H1 (cell line): ENCODE measurements at regions of chr7 and their contacts with region 1.

Region 1: DNA sequence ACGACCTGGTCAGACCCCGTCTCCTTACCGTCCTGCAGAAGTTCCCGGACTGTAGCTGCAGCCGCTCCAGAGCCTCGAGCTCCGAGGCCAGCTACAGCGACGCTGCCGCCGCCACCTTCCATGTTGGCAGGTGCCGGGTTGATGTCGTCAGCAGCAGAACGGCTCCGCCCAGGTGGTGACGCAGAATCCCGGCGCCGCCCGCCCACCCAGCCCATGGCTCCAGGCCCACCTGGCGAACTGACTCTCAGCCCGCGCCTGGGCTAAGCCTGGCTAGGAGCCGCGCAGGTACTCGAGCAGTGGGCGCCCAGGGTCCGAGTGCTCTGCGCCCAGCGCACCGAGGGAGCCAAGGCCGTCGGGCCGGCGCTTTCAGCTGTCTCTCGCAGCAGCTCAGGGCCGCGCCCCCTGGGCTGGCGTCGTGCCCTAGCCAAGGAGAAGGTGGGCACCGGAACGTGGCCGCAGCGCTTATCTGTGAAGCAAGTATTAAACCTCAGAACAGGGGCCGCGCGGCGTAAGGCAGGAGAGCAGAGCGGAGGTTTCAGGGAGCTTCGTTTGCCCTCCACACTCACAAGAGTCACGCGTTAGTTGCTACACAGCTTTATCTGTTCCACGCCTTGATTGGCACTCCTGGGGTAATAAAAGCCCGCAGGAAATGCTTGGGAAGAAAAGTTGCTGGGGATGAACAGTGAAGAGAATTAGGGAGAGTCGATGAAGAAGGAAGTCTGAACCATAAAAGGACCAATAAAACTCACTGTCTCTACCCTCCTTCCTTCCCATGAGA is at the starts of genes COG5 and DUS4L:
- DNase-seq: peak; percentile 50 to 92
- H3K4me3 ChIP-seq: peak within 1 kb of the TSS; percentile 80 to 99 (median 94)
- H3K27ac ChIP-seq: peak within 1 kb of the TSS; percentile 97
- H3K4me1 ChIP-seq: peaks cover 0 to 3% (median 0%) of the 10 kb centered on the region in 4 experiments; a peak in 2 of 7 replicates
- H3K27me3 ChIP-seq: no peaks in the 10 kb centered on the region
- CTCF ChIP-seq: no peak
- EP300 ChIP-seq: no peak
- POLR2A ChIP-seq: peak; percentile 75 to 96
- RAD21 ChIP-seq: no peak
- total RNA-seq, gene COG5: 18.1 and 28.1 TPM in 2 replicates
- total RNA-seq, gene DUS4L: 11.1 and 11.5 TPM in 2 replicates

Region 2: GRCh38 chr7:107262857-107263256 is 301.1 kb before region 1 on chr7:
- CTCF ChIA-PET with region 1: no interaction called
- POLR2A ChIA-PET with region 1: no interaction called
- DNase-seq: no peak
- H3K4me3 ChIP-seq: no peak overlapping the region
- H3K27ac ChIP-seq: no peak overlapping the region
- H3K4me1 ChIP-seq: no peaks in the 10 kb centered on the region
- H3K27me3 ChIP-seq: no peaks in the 10 kb centered on the region
- CTCF ChIP-seq: no peak
- EP300 ChIP-seq: no peak
- POLR2A ChIP-seq: no peak
- RAD21 ChIP-seq: no peak

Region 3: GRCh38 chr7:107446531-107446930 is 117.4 kb before region 1 on chr7:
- CTCF ChIA-PET with region 1: no interaction called
- POLR2A ChIA-PET with region 1: no interaction called
- DNase-seq: no peak
- H3K4me3 ChIP-seq: no peak overlapping the region
- H3K27ac ChIP-seq: no peak overlapping the region
- H3K4me1 ChIP-seq: no peaks in the 10 kb centered on the region
- H3K27me3 ChIP-seq: no peaks in the 10 kb centered on the region
- CTCF ChIP-seq: no peak
- EP300 ChIP-seq: no peak
- POLR2A ChIP-seq: no peak
- RAD21 ChIP-seq: no peak

Region 4: DNA sequence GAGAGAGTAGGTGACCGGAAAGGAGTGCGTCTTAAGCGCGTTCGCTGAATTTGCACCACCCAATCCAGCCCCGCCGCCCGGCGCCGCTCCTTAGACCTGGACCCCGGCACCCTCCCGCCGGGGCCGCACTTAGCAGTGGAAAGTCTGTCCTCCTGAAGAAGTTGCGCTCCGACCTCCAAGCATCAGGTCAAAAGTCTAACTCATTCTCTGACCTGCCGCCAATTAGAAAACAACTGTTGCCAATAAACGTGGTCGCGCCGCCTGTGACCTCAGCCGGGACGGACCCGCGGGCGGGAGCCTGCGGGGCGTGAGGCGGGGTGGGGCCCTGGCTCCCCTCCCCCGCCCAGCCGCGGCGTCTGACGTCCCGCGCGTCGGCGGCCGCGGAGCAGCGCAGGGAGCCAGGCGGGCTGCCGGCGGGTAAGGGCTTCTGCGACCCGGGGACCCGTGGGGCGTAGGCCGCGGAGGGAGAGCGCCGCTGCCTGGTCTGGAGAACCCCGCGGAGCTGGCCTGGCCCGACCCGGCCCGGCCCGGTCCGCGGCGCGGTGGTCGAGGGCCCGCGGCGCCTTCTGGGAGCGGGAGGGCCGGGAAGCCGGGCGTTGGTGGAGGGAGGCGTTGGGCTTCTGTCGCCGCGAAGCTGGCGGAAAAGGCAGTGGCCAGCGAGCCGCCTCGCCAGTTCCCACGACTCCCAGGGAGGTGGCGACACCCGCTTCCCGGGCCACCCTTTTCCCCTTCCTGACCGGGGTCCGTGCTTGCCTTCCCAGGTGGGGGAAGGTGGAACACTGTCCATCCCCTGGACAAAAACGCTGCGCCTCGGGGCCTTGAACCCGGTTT is 16.1 kb after region 1 on chr7 and contains the start of gene BCAP29:
- CTCF ChIA-PET with region 1: interaction called, 6 read pairs
- POLR2A ChIA-PET with region 1: interaction called, 21 read pairs
- DNase-seq: peak; percentile 9 to 81
- H3K4me3 ChIP-seq: peak within 1 kb of the TSS; percentile 77 to 95 (median 84)
- H3K27ac ChIP-seq: peak within 1 kb of the TSS; percentile 44; the same call in 1 of the 2 replicates
- H3K4me1 ChIP-seq: no peaks in the 10 kb centered on the region
- H3K27me3 ChIP-seq: no peaks in the 10 kb centered on the region
- CTCF ChIP-seq: peak in 2 of 3 experiments; percentile 20 to 25; a peak in 2 of 4 replicates
- EP300 ChIP-seq: 0 out of 3 replicates have a peak, but pooled peaks of 1 of the 2 experiments have one; percentile 20
- POLR2A ChIP-seq: peak in 1 of 2 experiments; percentile 60
- RAD21 ChIP-seq: peak; percentile 32 to 38; a peak in 3 of 4 replicates
- total RNA-seq, gene BCAP29: 18.1 and 18.2 TPM in 2 replicates

Region 5: GRCh38 chr7:107743567-107744344 is 179.8 kb after region 1 on chr7 and contains the start of gene CBLL1:
- CTCF ChIA-PET with region 1: no interaction called
- POLR2A ChIA-PET with region 1: interaction called, 11 read pairs
- DNase-seq: peak; percentile 78 to 94
- H3K4me3 ChIP-seq: peak within 1 kb of the TSS; percentile 88 to 100 (median 96)
- H3K27ac ChIP-seq: peak within 1 kb of the TSS; percentile 94
- H3K4me1 ChIP-seq: peaks cover 0 to 8% (median 2%) of the 10 kb centered on the region in 4 experiments; a peak in 3 of 7 replicates
- H3K27me3 ChIP-seq: no peaks in the 10 kb centered on the region
- CTCF ChIP-seq: peak; percentile 28 to 48 (median 41)
- EP300 ChIP-seq: no peak; a peak in 1 of 3 replicates
- POLR2A ChIP-seq: peak in 1 of 2 experiments; percentile 61; a peak in 1 of 3 replicates
- RAD21 ChIP-seq: peak; percentile 21 to 33
- total RNA-seq, gene CBLL1: 31.9 and 34.0 TPM in 2 replicates